SK-N-SH (cell line): ENCODE measurements at regions of chr18 and their contacts with region 1.

Region 1: GRCh38 chr18:63320046-63320689 is 599 bp upstream of the BCL2 start:
- DNase-seq: peak; percentile 90
- H3K4me3 ChIP-seq: peak overlapping the region; percentile 51 to 84; a peak in 3 of 4 replicates
- H3K27ac ChIP-seq: peak overlapping the region; percentile 41 to 90; a peak in 3 of 4 replicates
- H3K4me1 ChIP-seq: peaks cover 9 to 18% of the 10 kb centered on the region in 2 experiments; a peak in 3 of 4 replicates
- H3K27me3 ChIP-seq: no peaks in the 10 kb centered on the region; the same call in 1 of the 2 replicates
- CTCF ChIP-seq: no peak
- EP300 ChIP-seq: no peak
- RAD21 ChIP-seq: no peak

Region 2: GRCh38 chr18:63025251-63026090 is 294.7 kb before region 1 on chr18:
- CTCF ChIA-PET with region 1: interaction called, 92 read pairs
- POLR2A ChIA-PET with region 1: interaction called, 4 read pairs
- DNase-seq: peak; percentile 68
- H3K4me3 ChIP-seq: no peak overlapping the region
- H3K27ac ChIP-seq: peak overlapping the region in 1 of 2 experiments; percentile 6; a peak in 2 of 4 replicates
- H3K4me1 ChIP-seq: peaks cover 0 to 7% of the 10 kb centered on the region in 2 experiments; a peak in 1 of 4 replicates
- H3K27me3 ChIP-seq: no peaks in the 10 kb centered on the region
- CTCF ChIP-seq: peak; percentile 34
- EP300 ChIP-seq: no peak
- RAD21 ChIP-seq: peak; percentile 78

Region 3: DNA sequence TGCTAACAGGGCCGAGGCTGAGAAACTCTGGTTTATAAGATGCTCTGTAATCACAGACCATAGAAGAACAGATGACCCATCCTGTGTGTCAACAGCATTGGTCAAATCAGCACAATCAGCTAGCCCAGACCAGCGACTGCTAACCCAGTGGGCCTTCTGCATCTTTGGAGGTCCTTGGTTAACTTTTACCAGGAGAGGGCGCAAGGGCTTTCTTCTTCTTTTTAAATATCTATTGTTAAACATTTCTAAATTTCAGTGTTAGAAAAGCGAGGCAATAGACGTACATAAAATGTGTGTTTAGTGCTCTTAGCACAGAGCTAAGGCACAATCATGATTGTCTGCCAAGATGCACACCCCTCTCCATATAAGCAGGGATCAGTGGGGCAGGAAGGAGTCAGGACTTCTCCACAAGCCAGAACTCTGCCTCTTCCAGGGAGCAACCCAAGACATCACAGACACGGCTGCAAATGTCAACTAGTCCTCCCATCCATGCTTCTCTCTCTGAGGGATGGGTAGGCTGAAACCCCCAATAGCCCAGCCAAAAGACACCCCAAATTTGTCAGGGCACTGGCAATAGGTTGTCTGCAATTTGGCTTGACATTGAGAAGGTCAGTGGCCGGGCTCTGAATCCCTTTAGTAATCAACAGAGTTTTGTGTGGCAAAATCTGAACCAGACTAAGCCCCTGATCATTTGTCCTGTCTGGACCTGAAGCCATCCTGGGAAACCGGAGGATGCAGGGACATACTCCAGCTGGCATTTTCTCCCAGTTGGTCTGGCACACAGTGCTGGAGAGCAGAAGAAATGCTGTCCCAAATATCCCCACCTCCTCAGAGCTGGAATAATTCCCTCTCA is 188.8 kb before region 1 on chr18:
- CTCF ChIA-PET with region 1: interaction called, 62 read pairs
- POLR2A ChIA-PET with region 1: no interaction called
- DNase-seq: peak; percentile 53
- H3K4me3 ChIP-seq: no peak overlapping the region; a peak in 1 of 4 replicates
- H3K27ac ChIP-seq: no peak overlapping the region; a peak in 1 of 4 replicates
- H3K4me1 ChIP-seq: peaks cover 0 to 12% of the 10 kb centered on the region in 2 experiments; a peak in 1 of 4 replicates
- H3K27me3 ChIP-seq: no peaks in the 10 kb centered on the region
- CTCF ChIP-seq: peak; percentile 79
- EP300 ChIP-seq: no peak
- RAD21 ChIP-seq: peak; percentile 74

Region 4: GRCh38 chr18:63195326-63196159 is 124.6 kb before region 1 on chr18:
- CTCF ChIA-PET with region 1: interaction called, 10 read pairs
- POLR2A ChIA-PET with region 1: no interaction called
- DNase-seq: no peak
- H3K4me3 ChIP-seq: no peak overlapping the region
- H3K27ac ChIP-seq: no peak overlapping the region
- H3K4me1 ChIP-seq: no peaks in the 10 kb centered on the region
- H3K27me3 ChIP-seq: no peaks in the 10 kb centered on the region
- CTCF ChIP-seq: no peak
- EP300 ChIP-seq: no peak
- RAD21 ChIP-seq: no peak

Region 5: GRCh38 chr18:63366213-63367052 is 46.3 kb after region 1 on chr18:
- CTCF ChIA-PET with region 1: interaction called, 10 read pairs
- POLR2A ChIA-PET with region 1: no interaction called
- DNase-seq: peak; percentile 76
- H3K4me3 ChIP-seq: peak overlapping the region; percentile 77 to 93
- H3K27ac ChIP-seq: peak overlapping the region; percentile 83 to 97
- H3K4me1 ChIP-seq: peaks cover 3 to 7% of the 10 kb centered on the region in 2 experiments; a peak in 3 of 4 replicates
- H3K27me3 ChIP-seq: no peaks in the 10 kb centered on the region
- CTCF ChIP-seq: no peak
- EP300 ChIP-seq: no peak
- RAD21 ChIP-seq: no peak

Region 6: GRCh38 chr18:63831080-63831788 is 511.1 kb after region 1 on chr18:
- CTCF ChIA-PET with region 1: no interaction called
- POLR2A ChIA-PET with region 1: no interaction called
- DNase-seq: no peak
- H3K4me3 ChIP-seq: no peak overlapping the region; a peak in 1 of 4 replicates
- H3K27ac ChIP-seq: peak overlapping the region; percentile 65 to 83
- H3K4me1 ChIP-seq: peaks cover 0 to 31% of the 10 kb centered on the region in 2 experiments; a peak in 3 of 4 replicates
- H3K27me3 ChIP-seq: no peaks in the 10 kb centered on the region
- CTCF ChIP-seq: no peak
- EP300 ChIP-seq: peak in 1 of 2 experiments; percentile 77; a peak in 2 of 4 replicates
- RAD21 ChIP-seq: no peak